Endothelial cell of umbilical vein (primary cell): ENCODE measurements at regions of chr6 and their contacts with region 1.

Region 1: DNA sequence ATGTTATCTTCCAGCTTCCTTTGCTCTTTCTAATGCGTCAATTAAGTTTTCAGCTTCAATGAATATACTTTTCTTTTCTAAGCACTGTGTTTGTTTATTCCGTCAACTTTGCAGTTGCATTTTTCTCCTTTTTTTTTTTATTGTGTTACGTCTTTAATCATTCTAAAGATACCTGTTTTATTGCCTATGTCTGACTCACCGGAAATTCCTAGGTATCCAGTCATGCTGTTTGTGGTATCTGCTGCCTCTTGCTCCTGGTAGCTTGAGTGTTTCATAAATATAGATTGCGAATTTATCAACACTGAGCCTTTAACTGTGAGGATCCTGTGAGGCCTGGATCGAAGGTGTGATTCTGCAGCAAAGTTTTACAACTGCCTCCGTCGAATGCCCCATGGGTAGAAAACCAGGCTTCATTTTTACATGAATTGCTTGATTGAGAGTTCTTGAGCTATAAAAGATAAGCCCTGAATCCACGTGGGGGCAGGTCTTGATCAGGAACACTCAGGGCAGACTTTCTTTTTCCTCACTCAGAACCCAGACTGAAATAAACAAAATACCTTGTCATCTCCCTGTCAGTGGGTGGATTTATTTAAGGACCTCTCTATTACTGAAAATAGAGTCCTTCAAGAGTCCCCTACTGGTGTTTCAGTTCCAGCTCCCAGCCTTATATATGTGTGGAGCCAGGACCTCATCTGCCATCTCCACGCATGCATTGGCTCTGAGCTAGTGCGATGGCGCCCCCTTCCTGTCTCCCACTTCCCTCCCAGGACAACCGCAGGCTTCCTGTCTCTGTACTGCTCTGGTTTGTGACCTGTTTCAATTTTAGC is 60.1 kb upstream of the LRRC1 start:
- DNase-seq: peak; percentile 75
- H3K4me3 ChIP-seq: peak overlapping the region in 1 of 3 experiments; percentile 18
- H3K27ac ChIP-seq: peak overlapping the region; percentile 98
- H3K4me1 ChIP-seq: peaks cover 40% of the 10 kb centered on the region
- H3K27me3 ChIP-seq: no peaks in the 10 kb centered on the region
- CTCF ChIP-seq: peak; percentile 25 to 43
- POLR2A ChIP-seq: no peak

Region 2: GRCh38 chr6:52910091-52910490 is 824.6 kb before region 1 on chr6:
- CTCF ChIA-PET with region 1: no interaction called
- POLR2A ChIA-PET with region 1: no interaction called
- dilution Hi-C with region 1: no loop called
- intact Hi-C with region 1: no loop called
- DNase-seq: no peak
- H3K4me3 ChIP-seq: no peak overlapping the region
- H3K27ac ChIP-seq: no peak overlapping the region
- H3K4me1 ChIP-seq: no peaks in the 10 kb centered on the region
- H3K27me3 ChIP-seq: no peaks in the 10 kb centered on the region
- CTCF ChIP-seq: no peak
- POLR2A ChIP-seq: no peak

Region 3: GRCh38 chr6:53752856-53753255 is 18.2 kb after region 1 on chr6:
- CTCF ChIA-PET with region 1: interaction called, 24 read pairs
- POLR2A ChIA-PET with region 1: interaction called, 3 read pairs
- dilution Hi-C with region 1: no loop called
- intact Hi-C with region 1: loop called (anchors 2 kb)
- DNase-seq: peak; percentile 50
- H3K4me3 ChIP-seq: no peak overlapping the region
- H3K27ac ChIP-seq: peak overlapping the region; percentile 75
- H3K4me1 ChIP-seq: peaks cover 15% of the 10 kb centered on the region
- H3K27me3 ChIP-seq: no peaks in the 10 kb centered on the region
- CTCF ChIP-seq: no peak
- POLR2A ChIP-seq: no peak

Region 4: GRCh38 chr6:53854843-53855567 is 120.3 kb after region 1 on chr6:
- CTCF ChIA-PET with region 1: no interaction called
- POLR2A ChIA-PET with region 1: interaction called, 3 read pairs
- dilution Hi-C with region 1: no loop called
- intact Hi-C with region 1: loop called (anchors 5 kb)
- DNase-seq: no peak
- H3K4me3 ChIP-seq: no peak overlapping the region
- H3K27ac ChIP-seq: no peak overlapping the region
- H3K4me1 ChIP-seq: peaks cover 30% of the 10 kb centered on the region
- H3K27me3 ChIP-seq: no peaks in the 10 kb centered on the region
- CTCF ChIP-seq: no peak
- POLR2A ChIP-seq: no peak

Region 5: GRCh38 chr6:54100411-54101006 is 365.8 kb after region 1 on chr6:
- CTCF ChIA-PET with region 1: no interaction called
- POLR2A ChIA-PET with region 1: no interaction called
- dilution Hi-C with region 1: no loop called
- intact Hi-C with region 1: no loop called
- DNase-seq: no peak
- H3K4me3 ChIP-seq: no peak overlapping the region
- H3K27ac ChIP-seq: no peak overlapping the region
- H3K4me1 ChIP-seq: no peaks in the 10 kb centered on the region
- H3K27me3 ChIP-seq: no peaks in the 10 kb centered on the region
- CTCF ChIP-seq: no peak
- POLR2A ChIP-seq: no peak